Activated CD4-positive, alpha-beta T cell treated with anti-CD3 and anti-CD28 coated beads for 36 hours (primary cell): ENCODE measurements at regions of chr1 and their contacts with region 1.

Region 1: DNA sequence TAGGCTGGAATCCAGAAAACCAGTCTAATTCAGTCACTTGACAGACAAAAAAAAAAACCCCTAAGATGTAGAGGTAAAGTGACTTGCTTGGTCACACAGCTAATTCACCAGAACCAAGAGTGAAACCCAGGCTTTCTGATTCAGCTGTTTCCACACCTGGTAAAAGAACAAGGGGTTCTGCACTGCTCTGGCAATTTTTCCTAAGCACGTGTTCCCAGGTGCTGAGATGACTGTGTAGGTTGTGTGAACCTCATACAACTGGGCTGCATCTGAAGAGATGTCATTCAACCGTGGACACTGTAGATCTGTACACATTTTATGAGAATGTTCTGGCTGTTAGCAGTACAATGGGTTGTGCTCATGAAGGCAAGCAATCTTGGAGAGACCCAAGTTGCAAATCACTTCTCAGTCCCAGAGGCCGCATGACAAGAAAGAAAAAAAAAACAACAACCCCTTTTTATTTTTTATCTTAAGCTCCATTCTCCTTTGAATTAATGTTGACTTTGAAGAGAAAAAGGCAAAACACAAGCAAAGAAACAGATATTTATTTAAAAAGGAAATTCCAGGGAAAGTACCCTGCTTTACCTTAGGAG is 95.4 kb downstream of the INTS7 start:
- DNase-seq: peak; percentile 78
- ATAC-seq: peak; percentile 55
- H3K4me3 Mint-ChIP-seq: no peak overlapping the region
- H3K27ac Mint-ChIP-seq: no peak overlapping the region
- H3K4me1 Mint-ChIP-seq: peaks cover 47% of the 10 kb centered on the region
- H3K27me3 Mint-ChIP-seq: no peaks in the 10 kb centered on the region

Region 2: DNA sequence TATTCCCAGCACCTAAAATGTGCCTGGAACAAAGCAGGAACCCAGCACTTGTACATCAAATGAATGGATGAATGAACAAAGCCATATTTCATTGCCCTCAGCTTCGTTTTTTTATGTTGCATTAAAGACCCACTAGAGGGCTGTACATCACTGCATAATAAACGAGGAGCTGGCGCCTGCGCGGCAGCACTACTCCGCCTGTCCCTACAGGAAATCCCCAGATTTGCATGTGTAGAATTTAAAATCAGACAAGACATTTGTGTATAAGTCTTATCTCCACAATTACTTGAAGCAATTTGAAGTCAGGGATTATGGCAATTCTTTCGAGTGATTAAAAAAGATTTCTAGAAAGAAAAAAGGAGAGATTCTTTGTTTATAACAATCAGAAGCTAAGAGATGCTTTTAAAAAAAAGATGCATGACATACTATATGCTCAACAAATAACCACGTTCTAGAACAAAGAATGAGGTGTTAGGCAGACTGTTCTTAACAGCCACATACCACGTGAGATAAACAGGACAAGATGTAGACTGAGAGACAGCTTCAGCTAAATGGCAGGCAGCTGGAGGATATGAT is 259.1 kb before region 1 on chr1:
- CTCF ChIA-PET with region 1: interaction called, 7 read pairs
- POLR2A ChIA-PET with region 1: no interaction called
- intact Hi-C with region 1: loop called (anchors 2 to 5 kb)
- DNase-seq: peak; percentile 85
- ATAC-seq: peak; percentile 94
- H3K4me3 Mint-ChIP-seq: no peak overlapping the region
- H3K27ac Mint-ChIP-seq: peak overlapping the region; percentile 71
- H3K4me1 Mint-ChIP-seq: peaks cover 7% of the 10 kb centered on the region
- H3K27me3 Mint-ChIP-seq: no peaks in the 10 kb centered on the region

Region 3: DNA sequence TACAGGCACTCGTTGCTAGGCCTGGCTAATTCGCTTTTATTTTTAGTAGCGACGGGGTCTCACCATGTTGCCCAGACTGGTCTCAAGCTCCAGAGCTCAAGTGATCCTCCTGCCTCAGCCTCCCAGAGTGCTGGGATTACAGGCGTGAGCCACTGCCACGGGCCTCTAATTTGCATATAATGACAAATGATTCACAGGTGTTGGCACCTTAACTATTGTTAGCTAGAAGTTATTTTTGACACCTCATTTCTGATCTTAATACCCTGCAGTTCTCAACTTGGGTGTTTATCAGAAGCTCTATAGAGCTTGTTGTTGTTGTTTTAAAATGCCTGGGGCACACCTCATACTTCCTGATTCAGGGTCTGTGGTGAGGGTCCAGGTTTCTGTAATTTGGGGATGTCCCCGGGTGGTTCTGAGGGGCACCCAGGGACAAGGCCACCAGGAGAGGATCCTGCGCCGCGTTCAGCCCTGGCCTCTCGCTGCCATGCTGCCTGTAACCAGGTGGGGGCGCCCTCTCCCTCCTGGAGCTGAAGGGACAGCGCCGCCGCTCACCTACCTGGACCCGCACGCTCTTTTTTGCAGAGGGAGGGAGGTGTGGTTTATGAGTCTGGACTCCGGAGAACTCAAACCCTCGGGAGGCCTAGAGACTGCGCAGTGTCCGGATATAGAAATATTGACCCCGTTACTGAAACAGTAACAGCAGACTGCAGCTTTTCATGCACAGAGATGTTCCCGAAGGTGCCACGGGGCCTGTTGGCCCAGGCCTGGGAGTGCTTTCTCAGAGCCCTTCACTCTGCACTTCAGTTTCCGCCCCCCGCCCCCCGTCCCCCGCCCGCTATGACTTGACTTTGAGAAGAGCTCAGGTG is 241.6 kb before region 1 on chr1:
- CTCF ChIA-PET with region 1: interaction called, 5 read pairs
- POLR2A ChIA-PET with region 1: no interaction called
- intact Hi-C with region 1: loop called in 1 of 2 experiments (anchors 5 kb)
- DNase-seq: peak; percentile 92
- ATAC-seq: peak; percentile 98
- H3K4me3 Mint-ChIP-seq: no peak overlapping the region
- H3K27ac Mint-ChIP-seq: no peak overlapping the region
- H3K4me1 Mint-ChIP-seq: peaks cover 9% of the 10 kb centered on the region
- H3K27me3 Mint-ChIP-seq: no peaks in the 10 kb centered on the region

Region 4: DNA sequence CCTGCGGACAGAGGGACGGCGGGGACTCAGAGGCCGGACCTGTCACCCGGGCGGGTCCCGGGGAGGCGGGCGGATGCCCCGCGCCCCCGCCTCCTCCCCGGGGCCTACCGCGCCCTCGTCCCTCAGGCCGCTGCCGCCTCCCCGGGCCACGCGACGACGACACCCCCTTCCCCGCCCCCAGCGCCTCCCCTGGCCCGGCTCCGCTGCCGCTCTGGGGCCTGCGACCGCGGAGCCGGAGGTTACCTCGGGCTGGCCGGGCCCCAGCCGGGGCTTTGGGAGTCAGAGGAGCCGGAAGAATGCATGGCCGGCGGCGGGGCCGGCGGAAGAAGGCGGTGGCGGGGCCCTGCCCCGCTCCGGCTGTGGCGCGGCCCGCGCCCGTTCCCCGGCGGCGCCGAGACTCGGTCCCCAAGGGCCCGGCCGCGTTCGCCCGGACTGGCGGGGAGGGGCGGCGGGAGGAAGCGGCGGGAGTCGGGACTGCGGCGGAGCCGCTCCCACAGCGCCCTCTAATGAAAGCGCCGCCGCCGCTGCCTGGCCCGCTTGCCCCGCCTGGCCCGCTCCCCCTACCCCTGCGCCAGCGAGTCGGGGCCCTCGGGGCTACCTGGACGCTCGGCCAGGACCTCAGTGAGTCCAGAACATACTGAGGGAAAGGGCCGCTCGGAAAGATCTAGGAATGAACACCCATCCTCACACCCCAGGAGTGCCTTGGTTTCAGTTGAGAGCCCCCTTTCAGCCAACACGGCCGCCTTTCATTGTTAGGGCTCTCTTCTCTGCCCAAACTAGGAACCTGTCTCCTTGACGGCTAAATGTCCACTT is 109.4 kb before region 1 on chr1 and contains the start of gene LPGAT1:
- CTCF ChIA-PET with region 1: no interaction called
- POLR2A ChIA-PET with region 1: no interaction called
- intact Hi-C with region 1: loop called (anchors 1 to 2 kb)
- DNase-seq: peak; percentile 86
- ATAC-seq: peak; percentile 83
- H3K4me3 Mint-ChIP-seq: peak within 1 kb of the TSS; percentile 82
- H3K27ac Mint-ChIP-seq: peak within 1 kb of the TSS; percentile 85
- H3K4me1 Mint-ChIP-seq: peaks cover 57% of the 10 kb centered on the region
- H3K27me3 Mint-ChIP-seq: no peaks in the 10 kb centered on the region
- total RNA-seq, gene LPGAT1: 21.7 to 24.9 TPM

Region 5: DNA sequence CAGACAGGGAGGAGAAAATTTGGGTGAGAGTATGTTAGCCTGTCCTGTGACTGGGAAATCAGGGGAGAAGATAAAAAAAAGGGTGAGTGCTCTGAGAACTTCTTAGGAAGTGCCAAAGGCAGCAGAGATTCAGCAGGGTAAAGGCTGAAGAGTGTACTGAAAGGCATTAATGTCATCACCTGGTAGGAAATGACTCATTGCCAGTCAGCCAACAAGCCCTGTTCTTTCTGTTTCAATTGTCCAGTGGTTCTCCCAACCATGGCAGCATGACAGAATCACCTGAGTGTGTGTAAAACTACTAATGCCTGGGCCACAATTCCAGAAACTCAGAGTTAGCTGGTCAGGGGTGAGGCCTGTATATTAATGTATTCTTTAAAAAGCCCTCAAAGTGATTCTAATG is 11.9 kb after region 1 on chr1:
- CTCF ChIA-PET with region 1: no interaction called
- POLR2A ChIA-PET with region 1: no interaction called
- intact Hi-C with region 1: no loop called
- DNase-seq: no peak
- ATAC-seq: peak; percentile 47
- H3K4me3 Mint-ChIP-seq: no peak overlapping the region
- H3K27ac Mint-ChIP-seq: no peak overlapping the region
- H3K4me1 Mint-ChIP-seq: peaks cover 6% of the 10 kb centered on the region
- H3K27me3 Mint-ChIP-seq: no peaks in the 10 kb centered on the region

Region 6: DNA sequence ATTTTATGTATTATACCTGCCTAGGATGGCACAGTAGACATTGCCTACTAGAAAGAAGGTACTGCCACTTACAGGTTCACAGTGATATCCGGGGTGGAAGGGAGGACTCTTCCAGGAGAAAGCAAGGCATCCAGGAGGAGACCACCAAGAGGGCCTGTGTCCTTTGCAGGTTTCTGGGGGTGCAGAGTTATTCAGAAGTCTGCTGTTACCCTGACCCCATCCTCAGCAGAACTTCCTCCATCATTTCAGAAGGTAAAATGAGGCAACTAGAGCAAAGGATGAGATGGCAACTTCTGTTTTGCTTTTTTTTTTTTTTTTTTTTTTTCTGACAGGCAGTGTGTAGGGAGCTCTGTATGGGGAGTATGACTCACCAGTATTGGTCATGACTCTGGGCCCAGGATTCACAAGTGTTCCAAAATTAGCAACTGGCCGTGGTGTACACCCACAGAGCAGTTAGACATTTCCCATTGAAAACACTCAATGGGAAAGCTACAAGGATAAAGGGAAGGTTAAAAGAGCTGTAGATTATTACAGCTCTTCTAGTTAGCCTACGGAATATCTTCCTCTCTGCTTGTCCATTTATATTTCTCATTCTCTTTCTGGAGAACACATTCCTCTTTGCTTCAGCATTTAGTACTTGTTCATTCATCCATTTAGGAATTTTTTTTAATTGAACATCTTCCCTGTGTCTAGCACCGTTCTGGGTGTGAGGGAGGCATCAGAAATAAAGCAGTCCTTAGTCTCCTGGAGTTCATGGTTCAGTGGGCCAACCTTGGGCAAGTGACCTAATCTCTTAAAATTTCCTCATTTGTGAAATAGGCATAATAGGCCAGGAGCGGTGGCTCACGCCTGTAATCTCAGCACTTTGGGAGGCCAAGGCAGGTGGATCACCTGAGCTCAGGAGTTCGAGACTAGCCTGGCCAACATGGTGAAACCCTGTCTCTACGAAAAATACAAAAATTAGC is 294.7 kb after region 1 on chr1:
- CTCF ChIA-PET with region 1: no interaction called
- POLR2A ChIA-PET with region 1: no interaction called
- intact Hi-C with region 1: loop called in 1 of 2 experiments (anchors 5 kb)
- DNase-seq: peak; percentile 61
- ATAC-seq: peak; percentile 95
- H3K4me3 Mint-ChIP-seq: no peak overlapping the region
- H3K27ac Mint-ChIP-seq: peak overlapping the region; percentile 39
- H3K4me1 Mint-ChIP-seq: peaks cover 35% of the 10 kb centered on the region
- H3K27me3 Mint-ChIP-seq: no peaks in the 10 kb centered on the region

Region 7: DNA sequence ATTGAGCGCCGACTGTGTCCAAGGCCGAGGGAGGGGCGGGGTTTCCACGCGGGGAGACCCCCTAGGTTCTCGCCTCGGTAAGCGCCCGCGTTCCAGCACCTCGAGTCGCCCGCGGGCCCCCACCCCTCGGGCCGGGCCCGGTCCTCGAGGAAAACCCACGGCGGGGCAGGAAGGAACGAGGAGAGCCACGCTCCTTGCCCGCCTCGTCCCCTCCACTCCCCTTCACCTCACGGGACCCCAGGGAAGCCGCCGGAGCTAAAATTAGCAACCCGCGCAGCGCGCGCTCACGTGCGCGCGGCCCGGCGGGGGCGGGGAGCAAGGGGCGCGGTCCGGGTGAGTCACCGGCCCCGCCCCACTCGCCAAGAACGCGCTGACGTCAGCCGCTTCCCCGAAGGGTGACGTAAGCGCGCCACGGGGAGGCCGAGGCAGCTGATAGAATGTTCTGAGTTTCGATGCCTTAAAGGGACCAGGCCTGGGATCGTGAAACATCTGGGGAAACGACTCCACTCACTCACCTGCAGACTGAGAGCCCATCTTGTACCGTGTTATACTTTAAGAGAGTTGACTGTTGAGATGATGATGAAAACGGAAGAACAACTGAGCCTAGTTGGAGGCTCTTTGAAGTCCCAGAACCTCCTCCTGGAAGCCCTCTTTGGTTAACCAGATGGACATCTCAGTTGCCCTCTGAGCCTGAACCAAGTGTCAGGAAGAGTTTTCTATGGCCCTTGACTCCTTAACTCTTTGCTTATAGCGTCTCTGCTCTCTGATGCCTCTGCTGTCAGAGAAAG is 618.9 kb after region 1 on chr1:
- CTCF ChIA-PET with region 1: no interaction called
- POLR2A ChIA-PET with region 1: no interaction called
- intact Hi-C with region 1: loop called in 1 of 2 experiments (anchors 2 kb)
- DNase-seq: peak; percentile 95
- ATAC-seq: peak; percentile 90
- H3K4me3 Mint-ChIP-seq: peak overlapping the region; percentile 61
- H3K27ac Mint-ChIP-seq: peak overlapping the region; percentile 95
- H3K4me1 Mint-ChIP-seq: peaks cover 19% of the 10 kb centered on the region
- H3K27me3 Mint-ChIP-seq: peaks cover 14% of the 10 kb centered on the region

Region 8: DNA sequence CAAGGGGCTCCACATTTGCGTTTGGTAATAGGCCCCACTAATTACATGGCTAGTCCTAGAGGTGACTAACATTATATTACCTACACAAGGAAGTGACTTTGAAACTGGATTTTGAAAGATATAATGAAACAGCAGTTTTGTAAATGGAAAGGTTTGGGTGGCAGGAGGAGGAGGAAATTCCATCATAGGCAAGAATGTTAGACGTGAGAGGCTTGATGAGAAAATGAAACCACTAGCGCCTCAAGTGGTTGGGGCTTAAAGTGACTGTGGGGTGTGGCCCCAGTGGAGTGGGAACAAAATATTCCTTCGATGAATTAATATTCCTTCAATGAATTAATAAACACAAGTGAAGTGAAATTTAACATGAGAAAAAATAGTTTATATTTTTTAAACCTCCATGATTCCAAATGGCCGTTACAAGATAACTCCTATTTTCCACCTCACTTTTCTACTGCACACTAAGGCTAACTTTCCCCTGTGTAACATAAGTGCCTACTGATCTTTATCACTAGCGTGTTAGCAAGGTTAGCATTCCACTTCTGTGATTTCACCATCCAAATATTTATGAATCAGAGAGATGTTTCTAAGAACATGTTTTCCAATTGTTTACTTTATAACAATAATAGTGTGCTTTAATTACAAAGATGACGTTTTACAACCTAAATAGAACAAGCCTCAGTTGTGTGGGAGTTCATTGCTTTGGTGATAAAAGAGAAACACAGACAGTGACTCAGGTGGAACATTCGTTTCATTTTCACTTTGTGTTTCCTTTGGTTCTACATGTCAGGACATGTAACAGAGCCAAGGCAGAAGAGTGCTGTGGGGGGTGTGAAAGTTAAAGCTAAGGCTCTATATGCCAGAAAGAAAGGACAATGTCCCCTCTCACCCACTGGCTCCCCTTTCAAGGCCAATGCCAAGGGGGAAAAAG is 656.1 kb after region 1 on chr1:
- CTCF ChIA-PET with region 1: no interaction called
- POLR2A ChIA-PET with region 1: no interaction called
- intact Hi-C with region 1: loop called in 1 of 2 experiments (anchors 5 kb)
- DNase-seq: peak; percentile 64
- ATAC-seq: peak; percentile 91
- H3K4me3 Mint-ChIP-seq: peak overlapping the region; percentile 58
- H3K27ac Mint-ChIP-seq: peak overlapping the region; percentile 89
- H3K4me1 Mint-ChIP-seq: peaks cover 39% of the 10 kb centered on the region
- H3K27me3 Mint-ChIP-seq: peaks cover 12% of the 10 kb centered on the region

Region 9: GRCh38 chr1:212655668-212656423 is 715.9 kb after region 1 on chr1:
- CTCF ChIA-PET with region 1: no interaction called
- POLR2A ChIA-PET with region 1: no interaction called
- intact Hi-C with region 1: no loop called
- DNase-seq: no peak
- ATAC-seq: no peak
- H3K4me3 Mint-ChIP-seq: no peak overlapping the region
- H3K27ac Mint-ChIP-seq: no peak overlapping the region
- H3K4me1 Mint-ChIP-seq: no peaks in the 10 kb centered on the region
- H3K27me3 Mint-ChIP-seq: peaks cover 11% of the 10 kb centered on the region